ENCODE measurements at regions of chr2 and their contacts with region 1.

Region 1: GRCh38 chr2:240851078-240851991 is 17.3 kb upstream of the AGXT start:
- DNase-seq: peak in 1 of 2 donors; percentile 89
- H3K4me3 ChIP-seq: no peak overlapping the region
- H3K27ac ChIP-seq: no peak overlapping the region
- H3K4me1 ChIP-seq: no peaks in the 10 kb centered on the region
- H3K27me3 ChIP-seq: no peaks in the 10 kb centered on the region
- CTCF ChIP-seq: peak; percentile 87 to 95 (median 94)

Region 2: GRCh38 chr2:240810207-240810606 is 41.1 kb before region 1 on chr2:
- intact Hi-C with region 1: no loop called
- DNase-seq: no peak
- H3K4me3 ChIP-seq: no peak overlapping the region
- H3K27ac ChIP-seq: no peak overlapping the region
- H3K4me1 ChIP-seq: no peaks in the 10 kb centered on the region
- H3K27me3 ChIP-seq: no peaks in the 10 kb centered on the region
- CTCF ChIP-seq: no peak

Region 3: DNA sequence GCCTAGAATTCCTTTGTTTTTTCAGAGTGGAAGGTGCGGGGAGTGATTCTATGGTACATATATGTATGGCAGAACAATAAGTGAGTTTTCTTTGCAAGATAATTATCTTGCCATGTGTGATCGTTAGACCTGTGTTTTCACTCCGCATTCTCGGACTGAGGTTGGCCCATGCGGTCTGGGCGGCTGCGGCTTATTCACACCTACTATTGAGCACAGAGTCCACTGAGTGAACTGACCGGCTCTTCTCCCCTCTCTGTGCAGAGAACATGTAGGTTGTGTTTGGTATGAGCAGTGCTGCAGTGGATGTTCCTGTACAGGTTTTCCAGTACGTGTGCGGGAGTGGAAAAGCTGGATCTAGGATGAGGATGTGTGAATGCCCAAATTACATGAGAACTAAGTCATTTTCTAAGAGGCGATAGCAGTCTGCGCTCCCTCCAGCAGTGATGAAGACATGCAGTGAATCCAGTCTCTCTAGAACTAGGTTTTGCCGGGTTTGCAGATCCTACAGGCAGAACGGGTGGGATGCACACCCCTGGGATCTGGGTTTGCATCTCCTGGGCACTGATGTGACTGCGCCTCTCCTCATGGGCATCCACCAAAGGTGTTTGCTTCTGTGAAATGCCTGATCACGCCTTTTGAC is 223.7 kb after region 1 on chr2:
- intact Hi-C with region 1: loop called (anchors 5 kb)
- DNase-seq: no peak
- H3K4me3 ChIP-seq: no peak overlapping the region
- H3K27ac ChIP-seq: no peak overlapping the region
- H3K4me1 ChIP-seq: no peaks in the 10 kb centered on the region
- H3K27me3 ChIP-seq: no peaks in the 10 kb centered on the region
- CTCF ChIP-seq: no peak

Region 4: DNA sequence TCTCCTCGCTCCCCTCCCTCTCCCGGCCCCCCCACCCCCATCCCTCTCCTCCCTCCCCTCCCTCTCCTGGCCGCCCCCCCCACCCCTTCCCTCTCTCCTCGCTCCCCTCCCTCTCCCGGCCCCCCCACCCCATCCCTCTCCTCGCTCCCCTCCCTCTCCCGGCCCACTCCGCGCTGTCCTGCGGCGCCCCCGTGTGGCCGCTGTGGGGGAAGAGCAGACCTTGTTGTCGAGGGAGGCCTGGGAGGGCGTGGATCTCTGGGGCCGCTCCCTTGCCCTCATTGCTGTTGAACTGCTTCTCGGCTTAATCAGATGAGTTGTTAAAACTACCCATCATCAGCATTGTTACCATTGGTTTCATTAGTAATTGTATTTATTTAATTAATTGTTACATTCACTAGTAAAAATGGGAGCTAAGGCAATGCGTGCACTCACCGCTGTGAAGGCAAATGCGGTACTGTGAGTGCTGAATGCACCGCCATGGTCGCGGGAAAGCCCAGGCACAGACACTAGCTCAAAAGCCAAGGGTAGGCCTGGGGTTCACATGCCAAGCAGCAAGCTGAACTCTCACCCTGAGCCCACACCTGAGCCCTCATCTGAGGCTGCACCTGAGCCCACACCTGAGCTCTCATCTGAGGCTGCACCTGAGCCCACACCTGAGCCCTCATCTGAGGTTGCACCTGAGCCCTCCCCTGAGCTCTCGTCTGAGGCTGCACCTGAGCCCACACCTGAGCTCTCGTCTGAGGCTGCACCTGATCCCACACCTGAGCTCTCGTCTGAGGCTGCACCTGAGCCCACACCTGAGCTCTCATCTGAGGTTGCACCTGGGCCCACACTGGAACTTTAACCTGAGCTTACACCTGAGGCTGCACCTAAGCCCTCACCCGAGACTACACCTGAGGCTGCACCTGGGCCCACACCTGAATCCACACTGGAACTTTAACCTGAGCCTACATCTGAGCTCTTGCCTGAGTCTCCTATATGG is 1026.9 kb after region 1 on chr2:
- intact Hi-C with region 1: loop called (anchors 5 kb)
- DNase-seq: peak in 1 of 2 donors; percentile 81
- H3K4me3 ChIP-seq: no peak overlapping the region
- H3K27ac ChIP-seq: no peak overlapping the region
- H3K4me1 ChIP-seq: peaks cover 5 to 9% of the 10 kb centered on the region in 2 donors
- H3K27me3 ChIP-seq: no peaks in the 10 kb centered on the region
- CTCF ChIP-seq: peak; percentile 44 to 82 (median 78)

Measured in ascending aorta (tissue), 2 donors.